Activated T-helper 1 cell treated with anti-CD3 and anti-CD28 coated beads, Interleukin-12 subunit alpha, Interleukin-12 subunit beta, Interleukin-2, Interleukin-4 antibody, amounts not matched to agents 30 ng/mL and 10 ng/mL and 1 ng/mL, durations not matched to agents 14 hours and 24 hours and 36 hours (primary cell): ENCODE measurements at regions of chr7 and their contacts with region 1.

Region 1: DNA sequence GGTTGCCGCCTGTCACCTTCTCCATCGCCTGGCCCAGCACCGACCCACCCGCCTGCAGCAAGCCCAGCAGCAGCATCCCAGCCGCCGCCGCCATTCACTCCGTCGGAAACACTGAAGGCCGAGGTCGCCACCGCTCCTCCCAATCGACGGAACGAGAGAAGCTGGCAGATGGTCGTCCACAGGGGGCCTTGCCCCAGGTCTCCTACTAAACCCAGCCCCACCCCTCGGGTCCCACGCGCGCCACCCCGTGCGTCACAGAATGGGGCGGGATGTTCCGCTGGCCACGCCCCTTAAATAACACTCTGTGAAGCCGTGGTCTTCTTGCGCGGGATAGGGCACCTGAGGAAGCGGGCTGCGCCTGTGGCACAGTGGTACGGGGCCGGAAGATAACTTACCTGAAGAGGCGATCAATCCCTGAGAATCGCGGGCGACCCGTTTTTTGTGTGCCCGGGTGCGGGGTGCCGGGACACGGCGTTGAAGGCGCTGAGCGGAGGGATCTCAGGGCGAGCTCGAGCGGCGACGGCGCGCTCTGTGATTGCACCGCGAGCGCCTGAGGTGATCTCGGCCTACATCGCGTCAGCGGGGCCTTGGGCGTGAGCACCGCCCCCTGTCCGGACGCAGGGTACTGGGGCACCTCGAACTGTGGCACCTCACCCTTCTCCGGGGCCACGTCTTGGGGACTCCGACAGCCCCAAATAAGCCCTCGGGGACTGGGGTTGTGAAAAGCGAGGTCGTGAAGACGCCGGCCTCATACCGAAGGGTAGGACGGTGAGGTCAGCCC is at the start of gene CYP51A1:
- DNase-seq: peak; percentile 92
- H3K4me3 Mint-ChIP-seq: peak within 1 kb of the TSS; percentile 98
- H3K27ac Mint-ChIP-seq: peak within 1 kb of the TSS; percentile 97
- H3K4me1 Mint-ChIP-seq: peaks cover 44% of the 10 kb centered on the region
- H3K27me3 Mint-ChIP-seq: no peaks in the 10 kb centered on the region
- total RNA-seq, gene CYP51A1: 96.9 and 102 TPM in 2 replicates

Region 2: GRCh38 chr7:91940572-91941341 is 193.7 kb before region 1 on chr7 and contains the start of gene AKAP9:
- intact Hi-C with region 1: loop called (anchors 1 kb)
- DNase-seq: peak; percentile 87
- H3K4me3 Mint-ChIP-seq: peak within 1 kb of the TSS; percentile 88
- H3K27ac Mint-ChIP-seq: peak within 1 kb of the TSS; percentile 97
- H3K4me1 Mint-ChIP-seq: peaks cover 30% of the 10 kb centered on the region
- H3K27me3 Mint-ChIP-seq: peaks cover 11% of the 10 kb centered on the region
- total RNA-seq, gene AKAP9: 34.1 and 36.1 TPM in 2 replicates

Region 3: DNA sequence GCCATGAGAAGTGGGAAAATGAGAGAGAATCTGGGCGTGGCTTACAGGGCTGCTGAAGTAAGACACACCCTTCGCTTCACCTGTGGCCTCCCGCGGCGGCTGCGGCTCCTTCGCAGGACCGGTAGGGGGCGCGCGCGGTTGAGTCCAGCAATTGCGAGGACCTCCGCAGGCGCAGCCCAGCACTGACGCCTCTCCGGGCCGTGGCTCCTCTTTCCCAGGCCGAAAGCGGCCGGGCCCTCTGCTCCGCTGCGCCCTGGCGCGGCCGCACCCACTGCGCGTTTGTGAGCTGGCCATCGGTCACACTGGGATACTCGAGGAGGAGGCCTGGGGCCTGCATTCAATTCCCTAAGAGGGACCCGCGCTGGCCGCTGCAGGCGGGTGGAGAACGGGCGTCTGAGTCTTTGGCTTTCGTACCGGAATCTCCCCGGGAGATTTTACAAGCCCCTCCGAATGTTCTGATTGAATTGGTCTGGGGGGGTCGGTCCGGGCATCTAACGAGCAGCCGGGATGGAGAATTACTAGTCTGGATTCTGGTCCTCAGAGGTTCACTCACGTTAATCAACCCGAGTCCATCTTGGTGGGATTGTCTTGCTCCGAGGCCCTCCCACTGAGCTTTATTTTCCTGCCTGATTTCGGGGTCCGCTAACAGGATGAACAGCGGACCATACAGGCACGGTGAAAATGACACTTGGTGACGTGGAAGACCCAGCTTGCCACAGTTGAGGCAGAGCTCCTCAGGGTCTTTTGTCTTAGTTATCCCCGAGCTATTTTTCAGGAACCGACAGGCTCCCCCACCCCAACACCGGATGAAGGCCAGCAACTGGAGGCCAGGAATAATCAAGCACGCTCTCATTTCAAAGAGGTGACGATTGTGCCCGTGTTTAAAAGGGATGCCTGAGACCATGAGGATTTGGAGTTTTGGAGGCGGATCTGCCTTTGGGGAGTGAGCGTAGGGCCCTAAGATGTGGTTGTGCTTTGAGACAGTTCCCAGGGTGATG is 44.8 kb after region 1 on chr7 and contains the start of gene LRRD1:
- intact Hi-C with region 1: loop called (anchors 1 kb)
- DNase-seq: peak; percentile 84
- H3K4me3 Mint-ChIP-seq: peak within 1 kb of the TSS; percentile 69
- H3K27ac Mint-ChIP-seq: no peak within 1 kb of the TSS
- H3K4me1 Mint-ChIP-seq: no peaks in the 10 kb centered on the region
- H3K27me3 Mint-ChIP-seq: peaks cover 15% of the 10 kb centered on the region
- total RNA-seq, gene LRRD1: not detected in 2 replicates

Region 4: GRCh38 chr7:92421676-92422435 is 287.4 kb after region 1 on chr7:
- intact Hi-C with region 1: loop called (anchors 1 kb)
- DNase-seq: no peak
- H3K4me3 Mint-ChIP-seq: no peak overlapping the region
- H3K27ac Mint-ChIP-seq: no peak overlapping the region
- H3K4me1 Mint-ChIP-seq: peaks cover 13% of the 10 kb centered on the region
- H3K27me3 Mint-ChIP-seq: peaks cover 3% of the 10 kb centered on the region

Region 5: GRCh38 chr7:92584996-92585395 is 450.5 kb after region 1 on chr7:
- intact Hi-C with region 1: loop called (anchors 2 kb)
- DNase-seq: no peak
- H3K4me3 Mint-ChIP-seq: no peak overlapping the region
- H3K27ac Mint-ChIP-seq: no peak overlapping the region
- H3K4me1 Mint-ChIP-seq: peaks cover 70% of the 10 kb centered on the region
- H3K27me3 Mint-ChIP-seq: no peaks in the 10 kb centered on the region